AG04450 (cell line): ENCODE measurements at regions of chr16 and their contacts with region 1.

Region 1: DNA sequence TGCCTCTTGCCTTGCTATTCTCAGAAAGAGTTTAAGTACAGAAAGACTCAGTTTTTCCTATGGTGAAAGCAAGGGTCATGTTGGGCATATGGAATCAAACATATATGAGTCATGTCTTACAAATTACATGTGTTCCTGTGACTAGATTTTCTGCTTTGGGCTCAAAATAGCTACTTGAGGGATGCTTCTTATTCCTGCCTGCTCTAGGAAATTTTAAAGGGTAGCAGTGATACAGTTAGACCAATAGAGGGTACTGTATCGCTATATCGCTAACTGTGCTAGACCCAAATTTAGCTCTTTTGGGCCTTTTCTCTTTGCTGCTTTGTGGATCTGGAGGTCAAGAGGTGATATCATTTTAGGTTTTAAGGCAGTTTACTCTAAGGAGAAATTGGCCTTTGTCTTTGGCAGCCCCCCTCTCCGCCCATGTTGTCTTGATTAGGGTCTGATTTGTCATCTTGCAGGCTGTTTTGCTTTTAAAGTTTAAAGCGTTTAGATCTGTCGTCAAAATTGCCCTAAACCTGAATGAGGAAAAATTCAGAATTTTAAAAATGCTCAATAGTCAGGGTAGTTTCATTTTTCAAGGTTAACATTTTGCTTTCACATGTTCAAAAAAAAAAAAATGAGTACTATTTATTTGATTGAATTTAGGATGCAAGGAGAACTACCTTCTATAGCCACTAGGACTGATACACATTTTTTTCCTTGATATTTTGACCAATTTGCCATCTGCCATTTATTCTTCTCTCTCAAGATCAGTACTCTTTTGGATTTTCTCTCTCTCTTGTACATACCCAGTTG is 8.8 kb downstream of the NFATC3 start:
- DNase-seq: no peak
- H3K4me3 ChIP-seq: no peak overlapping the region
- H3K27ac ChIP-seq: no peak overlapping the region
- H3K27me3 ChIP-seq: no peaks in the 10 kb centered on the region
- CTCF ChIP-seq: peak; percentile 59

Region 2: DNA sequence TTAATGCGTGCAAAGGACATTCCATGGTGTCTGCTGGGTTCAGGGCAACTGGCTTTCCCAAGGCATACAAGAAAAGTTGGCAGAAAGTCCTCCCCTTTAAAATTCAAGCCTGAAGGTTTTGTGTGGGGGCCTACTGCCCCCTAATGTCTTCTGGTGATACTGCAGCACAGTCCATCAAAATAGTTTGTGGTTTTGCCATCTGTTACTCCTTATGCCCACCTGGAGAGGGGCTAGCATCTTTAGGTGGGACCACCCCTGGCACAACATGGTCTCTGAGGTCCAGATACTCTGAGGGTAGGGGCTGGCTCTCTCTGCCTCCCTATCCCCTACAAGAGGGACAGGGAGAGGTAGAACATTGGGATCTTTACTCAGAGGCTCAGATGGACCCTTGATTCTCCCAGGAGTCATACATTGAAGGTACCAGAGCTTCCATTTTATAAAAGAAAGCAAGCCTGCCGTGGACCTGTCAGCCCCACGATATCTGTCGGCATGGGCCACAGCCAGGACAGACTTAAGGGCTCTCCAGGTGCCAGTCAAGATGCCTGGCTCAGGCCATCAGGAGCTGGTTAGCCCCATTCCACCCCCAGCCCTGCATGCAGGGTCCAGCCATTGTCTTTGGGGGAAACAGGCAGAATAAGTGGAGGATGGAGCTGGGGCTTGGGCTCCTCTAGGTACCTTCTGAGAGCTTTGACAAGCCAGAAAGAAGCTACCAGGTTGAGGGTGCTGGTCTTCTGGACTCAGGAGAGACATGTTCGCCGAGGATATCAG is 135.6 kb after region 1 on chr16:
- CTCF ChIA-PET with region 1: interaction called, 28 read pairs
- POLR2A ChIA-PET with region 1: no interaction called
- DNase-seq: peak; percentile 29
- H3K4me3 ChIP-seq: no peak overlapping the region
- H3K27ac ChIP-seq: no peak overlapping the region
- H3K27me3 ChIP-seq: no peaks in the 10 kb centered on the region
- CTCF ChIP-seq: peak; percentile 96

Region 3: DNA sequence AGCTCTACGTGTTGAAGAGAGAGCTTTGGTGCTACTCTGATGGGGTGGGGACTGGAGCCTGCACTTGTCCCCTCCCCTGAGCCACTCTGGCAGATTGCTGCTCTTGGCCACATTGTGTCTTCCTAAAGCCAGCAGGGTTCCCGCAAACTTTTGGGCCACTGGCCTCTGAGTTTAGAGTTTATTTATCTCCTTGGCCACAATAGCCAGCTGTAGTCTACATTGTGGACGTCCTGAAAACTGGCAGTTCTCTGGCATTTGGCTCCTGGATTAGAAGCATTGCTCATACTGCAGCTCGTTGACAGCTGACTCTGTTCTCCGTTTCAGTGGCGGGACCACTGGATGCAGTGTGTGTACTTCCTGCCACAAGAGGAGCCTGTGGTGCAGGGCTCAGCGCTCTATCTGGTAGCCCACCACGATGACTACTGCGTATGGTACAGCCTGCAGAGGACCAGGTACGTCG is 251.4 kb after region 1 on chr16:
- CTCF ChIA-PET with region 1: no interaction called
- POLR2A ChIA-PET with region 1: interaction called, 10 read pairs
- DNase-seq: no peak
- H3K4me3 ChIP-seq: no peak overlapping the region
- H3K27ac ChIP-seq: no peak overlapping the region
- H3K27me3 ChIP-seq: no peaks in the 10 kb centered on the region
- CTCF ChIP-seq: no peak